Stomach (tissue), 19 donors: ENCODE measurements at regions of chr2 and their contacts with region 1.

Region 1: GRCh38 chr2:213166109-213166508 is 14.7 kb upstream of the IKZF2 start:
- DNase-seq: no peak
- H3K4me3 ChIP-seq: no peak overlapping the region
- H3K27ac ChIP-seq: no peak overlapping the region
- H3K4me1 ChIP-seq: no peaks in the 10 kb centered on the region
- H3K27me3 ChIP-seq: no peaks in the 10 kb centered on the region
- CTCF ChIP-seq: no peak
- EP300 ChIP-seq: no peak
- POLR2A ChIP-seq: no peak

Region 2: DNA sequence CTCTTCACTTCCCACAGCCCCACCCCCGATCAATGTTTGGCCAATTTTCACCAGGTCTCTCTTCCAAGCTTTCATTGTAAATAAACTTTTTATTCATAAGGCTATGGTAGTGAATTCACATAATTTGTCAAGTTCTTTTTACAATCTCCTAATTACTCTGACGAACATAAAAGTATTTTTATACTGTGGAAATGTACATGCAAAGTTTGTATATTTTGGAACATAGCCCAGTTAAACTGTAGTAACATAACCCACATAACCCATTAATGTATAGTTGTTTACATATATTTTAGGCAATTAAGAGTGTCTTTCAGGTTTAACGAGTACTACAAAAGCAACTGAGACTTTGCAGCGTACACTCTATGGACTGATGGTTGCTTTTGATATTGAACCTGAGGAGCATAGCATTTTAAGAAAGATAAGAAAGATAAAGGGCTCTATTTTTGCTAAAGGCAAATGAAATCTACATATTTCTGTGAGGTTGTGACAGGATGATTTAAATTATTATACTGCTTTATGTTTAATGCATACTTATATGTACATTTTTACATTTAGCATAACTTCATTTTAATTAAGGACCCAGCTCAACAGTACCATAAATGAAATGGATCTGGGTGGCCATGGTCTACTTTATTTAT is 399.1 kb before region 1 on chr2:
- intact Hi-C with region 1: loop called (anchors 10 kb)
- DNase-seq: no peak
- H3K4me3 ChIP-seq: no peak overlapping the region
- H3K27ac ChIP-seq: no peak overlapping the region
- H3K4me1 ChIP-seq: no peaks in the 10 kb centered on the region
- H3K27me3 ChIP-seq: no peaks in the 10 kb centered on the region
- CTCF ChIP-seq: no peak
- EP300 ChIP-seq: no peak
- POLR2A ChIP-seq: no peak